PC-9 (cell line): ENCODE measurements at regions of chr4 and their contacts with region 1.

Region 1: GRCh38 chr4:185993328-185993973 is 75.5 kb upstream of the TLR3 start:
- DNase-seq: no peak
- H3K4me3 ChIP-seq: no peak overlapping the region
- H3K27ac ChIP-seq: no peak overlapping the region
- H3K4me1 ChIP-seq: no peaks in the 10 kb centered on the region
- H3K27me3 ChIP-seq: no peaks in the 10 kb centered on the region
- CTCF ChIP-seq: no peak

Region 2: GRCh38 chr4:185767528-185767927 is 225.9 kb before region 1 on chr4:
- CTCF ChIA-PET with region 1: no interaction called
- POLR2A ChIA-PET with region 1: interaction called, 13 read pairs
- intact Hi-C with region 1: no loop called
- DNase-seq: no peak
- H3K4me3 ChIP-seq: no peak overlapping the region
- H3K27ac ChIP-seq: no peak overlapping the region
- H3K4me1 ChIP-seq: peaks cover 10% of the 10 kb centered on the region; the same call in 1 of the 2 replicates
- H3K27me3 ChIP-seq: no peaks in the 10 kb centered on the region
- CTCF ChIP-seq: no peak